Dorsolateral prefrontal cortex (tissue), 120 donors: ENCODE measurements at regions of chr21 and their contacts with region 1.

Region 1: DNA sequence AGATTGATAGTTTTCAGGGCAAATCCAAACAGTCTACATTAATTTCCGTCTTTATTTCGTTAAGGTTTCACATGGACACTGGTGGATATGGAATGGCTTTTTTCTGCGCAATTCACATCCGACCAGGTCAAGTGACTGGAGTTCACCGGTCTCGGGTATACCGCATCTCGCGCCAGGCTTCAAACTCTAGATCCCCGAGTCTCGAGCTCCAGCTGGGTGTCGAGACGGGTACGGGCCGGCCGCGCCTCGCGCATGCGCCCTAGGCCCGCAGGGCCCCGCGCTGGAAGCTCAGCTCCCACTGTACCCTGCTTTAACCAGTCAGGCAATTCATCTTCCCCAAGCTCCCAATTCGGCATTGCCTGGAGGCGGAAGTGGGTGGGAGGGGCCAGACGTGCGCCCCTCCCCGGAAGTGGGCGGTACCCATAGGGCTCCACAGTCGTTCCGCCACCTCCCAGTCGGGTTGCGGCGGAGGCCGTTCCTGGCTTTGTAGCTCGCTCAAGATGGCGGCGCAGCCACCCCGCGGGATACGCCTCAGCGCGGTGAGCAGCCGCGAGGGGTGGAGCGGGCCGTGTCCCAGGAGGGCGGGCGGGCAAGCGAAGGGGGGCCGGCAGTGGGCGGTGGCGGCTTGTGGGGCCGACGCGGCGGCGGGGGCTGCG is at the start of gene MORC3:
- DNase-seq: peak; percentile 96 to 99 (median 98)
- H3K4me3 ChIP-seq: peak within 1 kb of the TSS; percentile 64 to 95 (median 86)
- H3K27ac ChIP-seq: peak within 1 kb of the TSS; percentile 58 to 99 (median 97)
- H3K27me3 ChIP-seq: no peaks in the 10 kb centered on the region
- CTCF ChIP-seq: peak in 15 of 56 donors; percentile 4 to 45 (median 21)
- total RNA-seq, gene MORC3: 31.4 to 60.6 (median 43.0) TPM

Region 2: DNA sequence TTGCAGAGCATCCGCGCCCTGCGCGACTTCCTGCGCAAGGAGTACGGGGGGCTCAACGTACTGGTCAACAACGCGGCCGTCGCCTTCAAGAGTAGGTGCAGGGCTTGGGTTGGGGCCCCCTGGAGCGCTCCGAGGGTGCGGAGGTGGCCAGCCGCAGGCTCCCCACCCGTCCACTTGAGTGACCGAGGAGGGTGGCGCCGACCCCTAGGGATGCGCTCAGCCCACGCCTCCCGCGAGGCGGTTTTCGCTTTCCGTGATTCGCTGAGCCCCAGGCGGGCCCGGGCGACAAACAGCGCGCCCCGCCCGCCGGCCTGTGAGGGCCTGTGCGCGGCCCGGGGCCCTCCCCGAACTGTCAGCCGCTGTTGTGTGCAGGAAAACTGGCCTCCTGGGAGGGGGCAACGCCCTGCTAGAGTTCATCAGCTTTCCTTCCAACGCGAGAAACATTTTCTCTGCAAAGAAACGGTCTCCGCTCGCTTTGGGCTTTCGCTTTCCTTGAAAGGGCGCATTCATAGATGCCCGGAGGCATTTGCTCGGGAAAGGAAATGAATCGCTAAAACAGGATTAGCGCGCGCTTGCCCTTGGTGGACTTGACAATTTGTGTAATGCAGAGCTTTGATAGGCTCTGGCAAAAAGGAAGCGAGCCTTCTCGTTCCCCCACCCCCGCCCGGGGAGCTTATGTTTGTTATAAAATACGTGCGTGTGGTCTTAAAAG is 184.3 kb before region 1 on chr21:
- intact Hi-C with region 1: loop called (anchors 5 kb)
- DNase-seq: peak; percentile 52 to 84 (median 68)
- H3K4me3 ChIP-seq: peak overlapping the region; percentile 53 to 92 (median 77)
- H3K27ac ChIP-seq: peak overlapping the region in 58 of 59 donors; percentile 26 to 95 (median 88)
- H3K27me3 ChIP-seq: no peaks in the 10 kb centered on the region
- CTCF ChIP-seq: peak in 11 of 56 donors; percentile 5 to 37 (median 16)

Region 3: GRCh38 chr21:36156339-36156814 is 163.5 kb before region 1 on chr21:
- intact Hi-C with region 1: loop called (anchors 2 kb)
- DNase-seq: peak; percentile 99 to 100 (median 100)
- H3K4me3 ChIP-seq: peak overlapping the region; percentile 72 to 99 (median 90)
- H3K27ac ChIP-seq: peak overlapping the region in 45 of 59 donors; percentile 4 to 91 (median 79)
- H3K27me3 ChIP-seq: no peaks in the 10 kb centered on the region
- CTCF ChIP-seq: peak in 4 of 56 donors; percentile 7 to 25 (median 16)

Region 4: DNA sequence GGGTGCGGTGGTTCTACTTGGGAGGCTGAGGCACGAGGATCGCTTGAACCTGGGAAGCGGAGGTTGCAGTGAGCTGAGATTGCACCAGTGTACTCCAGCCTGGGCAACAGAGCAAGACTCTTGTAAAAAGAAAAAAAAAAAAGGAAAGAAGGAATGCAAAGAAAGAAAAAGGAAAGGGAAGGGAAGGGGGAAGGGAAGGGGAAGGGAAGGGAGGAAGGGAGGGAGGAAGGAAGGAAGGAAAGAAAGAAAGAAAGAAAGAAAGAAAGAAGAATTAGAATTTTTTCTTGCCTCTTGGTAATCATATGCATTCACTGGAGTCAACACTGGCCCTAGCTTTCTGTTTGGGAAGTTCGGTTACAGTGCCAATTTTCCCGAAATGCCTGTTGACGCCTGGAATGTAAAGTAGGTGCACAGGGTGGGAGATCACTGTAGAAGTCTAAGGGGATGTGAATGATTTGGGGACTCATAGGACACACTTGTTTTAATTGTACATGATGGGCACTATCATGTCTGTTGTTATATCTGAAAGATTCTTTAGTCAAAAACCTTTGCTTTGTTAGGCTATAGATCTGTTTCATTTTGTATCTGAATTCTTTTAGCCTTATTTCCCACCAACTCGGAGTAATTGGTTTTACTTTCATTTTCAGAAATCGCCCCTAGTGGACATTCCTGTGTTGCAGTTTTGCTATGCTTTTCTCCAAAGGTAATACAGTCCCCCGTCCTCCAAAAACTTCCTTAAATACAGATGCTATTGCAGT is 59.7 kb before region 1 on chr21:
- intact Hi-C with region 1: loop called in 1 of 2 experiments (anchors 2 kb)
- DNase-seq: peak in 2 of 10 donors; percentile 14 to 21
- H3K4me3 ChIP-seq: peak overlapping the region; percentile 21 to 80 (median 62)
- H3K27ac ChIP-seq: peak overlapping the region; percentile 18 to 93 (median 82)
- H3K27me3 ChIP-seq: no peaks in the 10 kb centered on the region
- CTCF ChIP-seq: peak; percentile 64 to 96 (median 83)

Region 5: DNA sequence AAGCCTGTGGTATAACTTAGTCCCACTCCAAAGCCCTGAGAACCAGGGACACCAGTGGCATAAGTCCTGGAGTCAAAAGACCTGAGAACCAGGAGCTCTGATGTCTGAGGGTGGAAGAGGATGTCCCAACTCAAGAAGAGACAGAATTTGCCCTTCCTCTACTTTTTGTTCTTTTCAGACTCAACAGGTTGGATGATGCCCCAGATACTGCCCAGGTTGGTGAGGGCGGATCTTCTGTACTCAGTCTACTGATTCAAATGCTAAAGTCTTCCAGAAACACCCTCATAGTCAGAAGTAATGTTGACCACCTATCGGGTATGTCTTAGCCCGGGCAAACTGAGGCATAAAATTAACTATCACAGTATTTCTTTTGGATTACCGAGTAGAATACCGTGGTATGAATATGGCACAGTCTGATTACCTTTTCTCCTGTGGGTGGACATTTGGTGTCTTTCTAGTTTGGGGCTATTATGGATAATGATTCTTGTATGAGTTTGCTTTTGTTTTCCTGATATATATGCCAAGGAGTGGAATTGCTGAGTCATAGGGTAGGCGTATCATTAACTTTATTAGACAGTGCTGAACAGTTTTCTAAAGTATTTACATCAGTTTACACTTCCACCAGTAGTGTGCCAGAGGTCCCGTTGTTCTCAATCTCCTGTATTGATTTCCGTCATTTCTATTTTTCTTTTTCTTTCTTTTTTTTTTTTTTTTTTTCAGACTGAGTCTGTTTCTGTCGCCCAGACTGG is 62.1 kb after region 1 on chr21:
- intact Hi-C with region 1: no loop called
- DNase-seq: no peak
- H3K4me3 ChIP-seq: no peak overlapping the region
- H3K27ac ChIP-seq: no peak overlapping the region
- H3K27me3 ChIP-seq: no peaks in the 10 kb centered on the region
- CTCF ChIP-seq: no peak